T-cell (primary cell): ENCODE measurements at regions of chr14 and their contacts with region 1.

Region 1: DNA sequence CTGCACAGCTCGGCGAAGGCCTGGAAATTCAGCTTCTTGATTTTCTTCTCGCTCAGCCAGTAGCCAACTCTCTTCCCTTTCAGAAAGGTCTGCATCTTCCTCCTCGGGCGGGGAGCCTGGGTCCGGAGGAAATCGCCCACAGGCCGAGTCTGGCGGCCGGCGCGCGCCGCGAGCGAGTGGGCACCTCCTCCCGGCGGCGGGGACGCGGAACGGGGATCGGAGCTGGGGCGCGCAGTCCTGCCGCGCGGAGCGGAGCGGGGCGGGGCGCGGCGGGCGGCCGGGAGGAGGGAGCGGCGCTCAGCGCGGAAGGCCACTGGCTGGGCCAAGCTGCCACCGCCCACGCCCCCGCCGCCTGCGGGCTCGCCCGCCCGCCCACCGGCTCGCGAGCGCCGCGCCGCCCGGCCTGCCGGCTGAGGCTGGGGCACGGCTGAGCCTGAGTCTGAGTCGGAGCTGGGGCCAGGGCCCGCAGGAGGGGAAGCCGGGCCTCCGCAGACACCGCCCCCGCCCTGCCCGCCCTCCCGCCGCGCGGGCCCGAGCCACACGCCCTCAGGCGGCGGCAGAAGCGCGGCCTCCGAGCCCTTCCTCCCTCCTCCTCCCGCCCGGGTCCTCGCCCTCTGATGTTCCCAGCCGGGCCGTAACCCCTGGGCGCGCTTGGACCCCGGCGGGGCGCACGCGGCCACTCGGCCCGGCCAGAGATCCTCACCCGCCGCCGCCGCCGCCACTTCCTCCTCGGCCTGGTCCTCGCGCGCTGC is 480 bp downstream of the ITPK1 start:
- DNase-seq: peak; percentile 45 to 91 (median 74)
- ATAC-seq: peak; percentile 80 to 88 (median 84)
- H3K4me3 ChIP-seq: peak overlapping the region; percentile 52 to 72
- H3K4me3 Mint-ChIP-seq: peak overlapping the region; percentile 80 to 89 (median 82)
- H3K27ac ChIP-seq: peak overlapping the region; percentile 23
- H3K27ac Mint-ChIP-seq: peak overlapping the region in 1 of 2 donors; percentile 55
- H3K4me1 ChIP-seq: peaks cover 16 to 41% of the 10 kb centered on the region in 2 experiments
- H3K4me1 Mint-ChIP-seq: peaks cover 22 to 28% (median 25%) of the 10 kb centered on the region in 3 donors
- H3K27me3 ChIP-seq: no peaks in the 10 kb centered on the region
- H3K27me3 Mint-ChIP-seq: no peaks in the 10 kb centered on the region

Region 2: GRCh38 chr14:93086441-93087055 is 28.7 kb before region 1 on chr14:
- CTCF ChIA-PET with region 1: no interaction called
- POLR2A ChIA-PET with region 1: no interaction called
- DNase-seq: no peak
- ATAC-seq: no peak
- H3K4me3 ChIP-seq: no peak overlapping the region
- H3K4me3 Mint-ChIP-seq: no peak overlapping the region
- H3K27ac ChIP-seq: no peak overlapping the region
- H3K27ac Mint-ChIP-seq: peak overlapping the region; percentile 63 to 64
- H3K4me1 ChIP-seq: peaks cover 2 to 38% of the 10 kb centered on the region in 2 experiments
- H3K4me1 Mint-ChIP-seq: peaks cover 31 to 68% (median 54%) of the 10 kb centered on the region in 3 donors
- H3K27me3 ChIP-seq: no peaks in the 10 kb centered on the region
- H3K27me3 Mint-ChIP-seq: no peaks in the 10 kb centered on the region

Region 3: GRCh38 chr14:93132470-93133065 is 17.3 kb after region 1 on chr14:
- CTCF ChIA-PET with region 1: interaction called, 11 to 66 read pairs
- POLR2A ChIA-PET with region 1: interaction called, 4 to 5 read pairs
- DNase-seq: peak in 12 of 35 experiments; percentile 9 to 61 (median 27)
- ATAC-seq: peak in 3 of 4 experiments; percentile 50 to 72 (median 54)
- H3K4me3 ChIP-seq: no peak overlapping the region
- H3K4me3 Mint-ChIP-seq: no peak overlapping the region
- H3K27ac ChIP-seq: no peak overlapping the region
- H3K27ac Mint-ChIP-seq: peak overlapping the region in 1 of 2 donors; percentile 48
- H3K4me1 ChIP-seq: no peaks in the 10 kb centered on the region
- H3K4me1 Mint-ChIP-seq: no peaks in the 10 kb centered on the region
- H3K27me3 ChIP-seq: peaks cover 0 to 10% of the 10 kb centered on the region in 2 experiments
- H3K27me3 Mint-ChIP-seq: no peaks in the 10 kb centered on the region

Region 4: DNA sequence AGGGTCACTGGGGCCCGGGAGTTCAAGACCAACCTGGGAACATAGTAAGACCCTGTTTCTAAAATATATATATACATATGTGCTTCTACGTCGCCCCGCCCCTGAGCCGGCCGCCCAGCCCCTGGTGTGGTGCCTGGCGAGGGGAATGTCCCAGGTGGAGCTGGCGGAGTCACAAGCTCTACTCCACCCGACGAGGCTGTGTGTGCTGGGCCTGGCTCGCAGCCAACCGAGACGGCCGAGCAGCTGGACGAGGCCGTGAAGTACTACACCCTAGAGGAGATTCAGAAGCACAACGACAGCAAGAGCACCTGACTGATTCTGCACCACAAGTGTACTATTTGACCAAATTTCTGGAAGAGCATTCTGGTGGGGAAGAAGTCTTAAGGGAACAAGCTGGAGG is 22.6 kb after region 1 on chr14:
- CTCF ChIA-PET with region 1: interaction called, 11 to 66 read pairs
- POLR2A ChIA-PET with region 1: interaction called in 1 of 2 experiments, 5 read pairs
- DNase-seq: no peak
- ATAC-seq: no peak
- H3K4me3 ChIP-seq: no peak overlapping the region
- H3K4me3 Mint-ChIP-seq: no peak overlapping the region
- H3K27ac ChIP-seq: no peak overlapping the region
- H3K27ac Mint-ChIP-seq: no peak overlapping the region
- H3K4me1 ChIP-seq: peaks cover 0 to 4% of the 10 kb centered on the region in 2 experiments
- H3K4me1 Mint-ChIP-seq: peaks cover 1 to 6% (median 2%) of the 10 kb centered on the region in 3 donors
- H3K27me3 ChIP-seq: peaks cover 0 to 4% of the 10 kb centered on the region in 2 experiments
- H3K27me3 Mint-ChIP-seq: no peaks in the 10 kb centered on the region

Region 5: DNA sequence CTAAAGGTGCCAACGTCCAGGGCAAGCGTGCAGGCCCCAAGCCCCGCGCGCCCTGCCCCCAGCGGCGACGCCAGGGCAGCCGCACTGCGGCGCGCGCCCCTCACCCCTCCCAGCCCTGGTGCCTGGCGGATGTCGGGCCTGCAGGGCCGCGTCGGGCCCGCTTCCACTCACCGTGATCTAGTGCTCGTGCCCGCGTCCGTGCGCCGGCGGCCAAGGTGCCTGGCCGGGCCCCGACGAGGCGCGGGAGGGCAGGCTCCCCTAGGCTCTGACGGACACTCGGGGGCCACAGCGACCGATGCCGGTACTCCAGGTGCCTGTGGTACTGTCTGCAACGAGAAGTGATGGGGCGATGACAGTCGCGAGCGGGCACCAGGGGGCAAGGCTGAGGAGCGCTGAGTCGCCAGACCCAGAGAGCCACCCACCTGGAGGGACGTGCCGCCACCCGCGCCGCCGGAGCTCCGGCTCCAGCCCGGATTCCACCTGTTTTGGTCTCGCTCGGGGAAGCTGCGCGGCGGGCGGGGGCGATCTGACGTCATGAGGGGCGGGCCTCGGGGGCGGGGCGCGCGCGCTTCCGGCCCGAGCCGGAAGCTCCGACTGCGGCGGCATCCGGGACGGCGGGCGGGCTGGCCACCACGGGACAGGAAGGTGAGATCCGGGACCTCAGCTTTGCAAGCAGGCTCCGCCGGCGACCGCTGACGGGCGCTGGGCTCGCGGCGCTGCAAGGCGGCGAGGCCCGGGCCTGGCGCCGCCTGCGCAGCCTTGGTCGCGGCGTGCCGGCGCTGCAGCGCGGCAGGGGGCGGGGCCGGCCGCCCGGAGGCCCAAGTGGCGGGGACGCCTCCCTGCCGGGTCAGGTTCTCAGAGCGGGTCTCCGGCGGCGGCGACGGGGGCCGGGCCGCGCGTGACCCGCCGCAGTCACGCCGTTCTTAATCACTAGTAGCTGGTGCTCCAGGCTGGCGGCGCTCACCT is 69.4 kb after region 1 on chr14 and contains the starts of genes LYSET and MOAP1:
- CTCF ChIA-PET with region 1: interaction called, 10 to 21 read pairs
- POLR2A ChIA-PET with region 1: no interaction called
- DNase-seq: peak; percentile 84 to 95 (median 90)
- ATAC-seq: peak; percentile 91 to 93 (median 92)
- H3K4me3 ChIP-seq: peak within 1 kb of the TSS; percentile 85 to 92
- H3K4me3 Mint-ChIP-seq: peak within 1 kb of the TSS; percentile 91 to 95 (median 92)
- H3K27ac ChIP-seq: peak within 1 kb of the TSS; percentile 97
- H3K27ac Mint-ChIP-seq: peak within 1 kb of the TSS; percentile 94 to 97
- H3K4me1 ChIP-seq: peaks cover 24 to 30% of the 10 kb centered on the region in 2 experiments
- H3K4me1 Mint-ChIP-seq: peaks cover 39 to 44% (median 41%) of the 10 kb centered on the region in 3 donors
- H3K27me3 ChIP-seq: no peaks in the 10 kb centered on the region
- H3K27me3 Mint-ChIP-seq: no peaks in the 10 kb centered on the region
- total RNA-seq, gene LYSET: 7.9 to 16.9 (median 14.8) TPM
- total RNA-seq, gene MOAP1: 45.1 to 96.8 (median 47.9) TPM

Region 6: DNA sequence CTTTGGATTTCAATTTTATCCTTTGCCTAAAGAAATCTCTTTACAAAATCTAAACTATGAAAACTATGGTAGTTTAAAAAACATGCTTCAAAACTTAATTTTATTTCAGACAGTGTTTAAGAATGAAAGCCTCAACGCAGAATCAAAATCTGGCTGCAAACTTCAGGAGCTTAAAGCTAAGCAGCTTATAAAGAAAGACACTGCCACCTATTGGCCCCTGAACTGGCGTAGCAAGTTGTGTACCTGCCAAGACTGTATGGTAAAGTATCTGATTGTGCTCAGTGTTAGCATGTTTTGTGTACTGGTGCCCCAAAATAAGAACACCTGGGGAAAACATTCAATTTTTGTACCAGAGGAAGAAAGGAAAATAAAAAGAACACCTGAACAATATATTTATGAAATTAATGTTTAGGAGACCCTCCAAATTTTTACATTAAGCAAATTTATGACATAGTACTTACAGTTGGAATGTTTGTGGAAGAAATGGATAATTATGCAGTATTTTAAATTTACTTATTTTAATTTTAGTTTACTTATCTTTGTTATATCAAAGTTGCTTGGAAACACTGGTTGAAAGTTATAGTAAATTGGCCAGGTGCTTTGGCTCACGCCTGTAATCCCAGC is 104.0 kb after region 1 on chr14:
- CTCF ChIA-PET with region 1: interaction called in 1 of 2 experiments, 19 read pairs
- POLR2A ChIA-PET with region 1: no interaction called
- DNase-seq: peak in 32 of 35 experiments; percentile 19 to 74 (median 46)
- ATAC-seq: peak; percentile 67 to 91 (median 82)
- H3K4me3 ChIP-seq: no peak overlapping the region
- H3K4me3 Mint-ChIP-seq: no peak overlapping the region
- H3K27ac ChIP-seq: no peak overlapping the region
- H3K27ac Mint-ChIP-seq: no peak overlapping the region
- H3K4me1 ChIP-seq: no peaks in the 10 kb centered on the region
- H3K4me1 Mint-ChIP-seq: peaks cover 0 to 1% (median 0%) of the 10 kb centered on the region in 3 donors
- H3K27me3 ChIP-seq: no peaks in the 10 kb centered on the region
- H3K27me3 Mint-ChIP-seq: no peaks in the 10 kb centered on the region

Region 7: GRCh38 chr14:93395231-93395630 is 280.0 kb after region 1 on chr14:
- CTCF ChIA-PET with region 1: no interaction called
- POLR2A ChIA-PET with region 1: no interaction called
- DNase-seq: no peak
- ATAC-seq: no peak
- H3K4me3 ChIP-seq: no peak overlapping the region
- H3K4me3 Mint-ChIP-seq: no peak overlapping the region
- H3K27ac ChIP-seq: no peak overlapping the region
- H3K27ac Mint-ChIP-seq: no peak overlapping the region
- H3K4me1 ChIP-seq: no peaks in the 10 kb centered on the region
- H3K4me1 Mint-ChIP-seq: no peaks in the 10 kb centered on the region
- H3K27me3 ChIP-seq: no peaks in the 10 kb centered on the region
- H3K27me3 Mint-ChIP-seq: peaks cover 22 to 26% of the 10 kb centered on the region in 2 donors